Left colon (tissue), 2 donors: ENCODE measurements at regions of chr10 and their contacts with region 1.

Region 1: GRCh38 chr10:79195091-79195923 is 126.5 kb downstream of the ZMIZ1 start:
- DNase-seq: peak; percentile 81 to 88
- ATAC-seq: peak; percentile 88

Region 2: GRCh38 chr10:78047314-78047891 is 1147.9 kb before region 1 on chr10:
- intact Hi-C with region 1: loop called (anchors 5 to 10 kb)
- DNase-seq: peak; percentile 74 to 94
- ATAC-seq: peak; percentile 76

Region 3: GRCh38 chr10:78211561-78212051 is 983.7 kb before region 1 on chr10:
- intact Hi-C with region 1: loop called in 1 of 2 experiments (anchors 10 kb)
- DNase-seq: peak in 1 of 2 donors; percentile 18
- ATAC-seq: no peak

Region 4: GRCh38 chr10:79149662-79150443 is 45.5 kb before region 1 on chr10:
- intact Hi-C with region 1: no loop called
- DNase-seq: peak; percentile 79 to 81
- ATAC-seq: peak; percentile 76